A673 (cell line): ENCODE measurements at regions of chr14 and their contacts with region 1.

Region 1: DNA sequence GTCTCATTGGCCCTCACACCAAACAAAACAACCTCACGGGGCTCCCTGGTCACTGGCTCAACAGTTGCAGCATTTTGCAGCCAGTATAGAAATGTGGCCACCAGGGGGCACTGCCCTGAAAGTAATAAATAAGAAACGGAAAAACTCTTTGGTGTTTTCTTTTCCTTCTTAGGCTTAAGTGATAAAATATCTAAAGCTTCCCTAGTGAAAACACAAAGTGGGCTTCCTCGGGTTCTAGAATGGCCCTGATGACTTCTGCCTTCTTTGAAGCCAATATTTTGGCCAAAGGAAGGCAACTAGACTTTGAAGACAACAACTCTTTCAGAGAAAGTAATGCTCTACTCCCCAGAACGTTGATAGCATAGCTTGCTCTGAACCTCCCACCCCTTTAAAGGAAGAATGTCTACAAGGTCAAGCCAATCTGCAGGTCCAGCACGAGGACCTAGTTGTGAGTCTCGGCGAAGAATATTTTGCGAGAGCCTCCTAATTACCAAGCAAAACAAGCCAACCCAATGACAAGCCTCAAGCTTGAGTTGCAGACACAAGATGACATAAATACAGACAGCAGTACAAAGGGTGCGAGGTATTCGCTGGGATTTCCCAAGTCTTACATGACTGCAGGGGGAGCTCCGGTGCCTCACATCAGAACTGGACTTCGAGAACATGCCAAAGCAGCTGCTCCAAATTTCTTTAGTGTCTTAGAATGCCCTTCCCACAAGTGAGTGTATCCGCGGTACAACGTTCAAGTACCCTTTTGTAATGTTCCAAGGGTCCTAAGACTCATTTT is 2.6 kb downstream of the ITPK1 start:
- DNase-seq: peak; percentile 87
- H3K4me3 ChIP-seq: peak overlapping the region; percentile 80
- H3K27ac ChIP-seq: peak overlapping the region; percentile 5
- H3K4me1 ChIP-seq: peaks cover 14% of the 10 kb centered on the region
- H3K27me3 ChIP-seq: no peaks in the 10 kb centered on the region
- CTCF ChIP-seq: peak; percentile 84

Region 2: DNA sequence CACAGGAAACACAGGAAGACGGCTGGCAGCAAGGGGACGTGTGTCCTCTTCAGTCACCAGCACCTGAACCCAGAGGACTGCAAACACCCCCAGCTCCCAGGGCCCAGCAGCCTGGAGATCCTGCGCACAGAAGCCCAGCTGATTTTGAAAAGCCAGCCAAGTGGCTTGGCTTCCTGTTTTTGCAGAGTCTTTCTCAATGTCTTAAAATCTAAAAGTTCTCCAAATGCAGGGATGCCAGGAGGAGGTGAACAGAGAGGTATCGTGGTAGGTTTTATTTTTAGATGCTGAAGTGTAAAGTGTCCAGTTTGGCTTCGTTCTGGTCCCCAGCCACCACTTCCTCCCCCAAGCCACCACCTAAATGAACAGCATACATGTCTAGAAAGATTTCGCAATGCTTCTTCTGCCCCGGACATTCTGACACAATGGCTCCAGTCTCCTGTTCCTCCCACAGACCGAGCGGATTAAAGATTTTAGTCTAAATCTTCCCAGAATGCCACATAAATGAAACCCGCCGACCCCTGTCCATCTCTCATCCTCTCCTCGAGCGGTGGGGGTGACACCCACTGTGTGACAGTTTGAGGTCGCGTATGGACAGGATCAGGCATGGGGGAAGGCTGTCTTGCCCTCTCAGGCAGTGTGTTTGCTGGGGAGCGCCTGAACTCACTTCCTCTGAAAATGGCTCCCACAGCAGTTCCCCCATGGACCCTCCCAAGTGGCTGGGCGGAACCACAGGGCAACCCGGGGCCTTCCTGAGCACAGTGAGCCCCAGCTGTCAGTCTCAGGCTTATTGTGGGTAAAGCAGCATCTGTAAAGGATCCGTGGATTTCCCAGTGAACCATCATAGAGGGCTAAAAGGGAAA is 38.9 kb before region 1 on chr14:
- CTCF ChIA-PET with region 1: no interaction called
- POLR2A ChIA-PET with region 1: no interaction called
- intact Hi-C with region 1: no loop called
- DNase-seq: peak; percentile 37
- H3K4me3 ChIP-seq: no peak overlapping the region
- H3K27ac ChIP-seq: no peak overlapping the region
- H3K4me1 ChIP-seq: peaks cover 9% of the 10 kb centered on the region
- H3K27me3 ChIP-seq: no peaks in the 10 kb centered on the region
- CTCF ChIP-seq: no peak

Region 3: GRCh38 chr14:93137864-93138263 is 24.8 kb after region 1 on chr14:
- CTCF ChIA-PET with region 1: interaction called, 15 read pairs
- POLR2A ChIA-PET with region 1: no interaction called
- intact Hi-C with region 1: loop called (anchors 1 kb)
- DNase-seq: no peak
- H3K4me3 ChIP-seq: no peak overlapping the region
- H3K27ac ChIP-seq: no peak overlapping the region
- H3K4me1 ChIP-seq: no peaks in the 10 kb centered on the region
- H3K27me3 ChIP-seq: no peaks in the 10 kb centered on the region
- CTCF ChIP-seq: no peak

Region 4: DNA sequence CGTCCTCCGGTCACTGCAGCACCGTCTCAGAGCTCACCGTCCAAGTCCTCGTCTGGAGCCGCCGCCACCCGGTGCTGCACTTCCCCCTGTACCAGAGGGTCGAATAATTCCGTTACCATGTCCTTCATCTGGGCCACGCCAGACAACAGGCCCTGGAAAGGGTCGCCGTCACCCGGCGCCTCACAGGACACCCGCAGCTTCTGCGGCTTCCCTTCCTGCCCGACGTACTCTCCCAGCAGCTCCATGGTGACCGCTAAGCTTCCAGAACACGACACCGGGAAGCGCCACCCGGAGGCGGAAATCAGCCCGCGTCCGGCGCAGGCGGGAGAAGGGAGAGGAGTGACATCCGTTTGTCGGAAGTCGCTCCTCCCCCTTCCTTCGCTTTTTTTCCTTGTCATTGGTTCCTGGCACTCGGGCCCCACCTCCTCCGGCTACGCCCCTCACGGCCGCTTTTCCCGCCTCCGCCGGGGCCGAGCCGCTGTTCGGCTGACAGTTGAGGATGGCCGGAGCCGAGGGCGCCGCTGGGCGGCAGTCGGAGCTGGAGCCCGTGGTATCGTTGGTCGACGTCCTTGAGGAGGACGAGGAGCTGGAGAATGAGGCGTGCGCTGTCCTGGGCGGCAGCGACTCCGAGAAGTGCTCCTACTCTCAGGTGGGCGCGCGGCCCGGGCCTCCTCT is 93.8 kb after region 1 on chr14 and contains the starts of genes GON7 and UBR7:
- CTCF ChIA-PET with region 1: interaction called, 3 read pairs
- POLR2A ChIA-PET with region 1: no interaction called
- intact Hi-C with region 1: loop called (anchors 5 kb)
- DNase-seq: peak; percentile 99
- H3K4me3 ChIP-seq: peak within 1 kb of the TSS; percentile 94
- H3K27ac ChIP-seq: peak within 1 kb of the TSS; percentile 93
- H3K4me1 ChIP-seq: peaks cover 12% of the 10 kb centered on the region
- H3K27me3 ChIP-seq: no peaks in the 10 kb centered on the region
- CTCF ChIP-seq: peak; percentile 27; the same call in 1 of the 2 replicates
- total RNA-seq, gene GON7: 19.6 and 24.1 TPM in 2 replicates
- total RNA-seq, gene UBR7: 64.0 and 73.1 TPM in 2 replicates

Region 5: DNA sequence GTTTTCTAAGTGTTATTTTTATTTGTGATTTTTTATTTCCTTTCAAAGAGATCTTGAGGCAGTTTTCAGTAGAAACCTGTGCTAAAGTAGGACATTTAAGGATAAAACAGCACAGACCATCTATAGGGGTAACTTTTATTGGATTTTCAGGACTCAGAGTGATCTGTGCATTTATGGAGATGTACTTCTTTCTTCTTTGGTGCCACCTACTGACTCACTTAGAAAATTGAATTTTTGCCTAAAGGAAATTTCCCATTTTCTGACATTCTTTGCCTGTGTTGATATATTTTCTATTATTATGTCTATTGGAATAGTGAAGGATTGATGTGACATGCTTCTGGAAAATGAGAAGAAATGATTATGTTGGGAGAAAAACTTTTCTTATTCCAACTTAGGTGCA is 430.7 kb after region 1 on chr14:
- CTCF ChIA-PET with region 1: no interaction called
- POLR2A ChIA-PET with region 1: no interaction called
- intact Hi-C with region 1: loop called (anchors 1 kb)
- DNase-seq: peak; percentile 65
- H3K4me3 ChIP-seq: no peak overlapping the region
- H3K27ac ChIP-seq: no peak overlapping the region
- H3K4me1 ChIP-seq: peaks cover 10% of the 10 kb centered on the region
- H3K27me3 ChIP-seq: no peaks in the 10 kb centered on the region
- CTCF ChIP-seq: peak; percentile 67